Lower leg skin (tissue), 4 donors: ENCODE measurements at regions of chr11 and their contacts with region 1.

Region 1: GRCh38 chr11:7982582-7983119 is 4.5 kb upstream of the EIF3F start:
- DNase-seq: no peak
- H3K4me3 ChIP-seq: no peak overlapping the region
- CTCF ChIP-seq: no peak
- POLR2A ChIP-seq: no peak

Region 2: DNA sequence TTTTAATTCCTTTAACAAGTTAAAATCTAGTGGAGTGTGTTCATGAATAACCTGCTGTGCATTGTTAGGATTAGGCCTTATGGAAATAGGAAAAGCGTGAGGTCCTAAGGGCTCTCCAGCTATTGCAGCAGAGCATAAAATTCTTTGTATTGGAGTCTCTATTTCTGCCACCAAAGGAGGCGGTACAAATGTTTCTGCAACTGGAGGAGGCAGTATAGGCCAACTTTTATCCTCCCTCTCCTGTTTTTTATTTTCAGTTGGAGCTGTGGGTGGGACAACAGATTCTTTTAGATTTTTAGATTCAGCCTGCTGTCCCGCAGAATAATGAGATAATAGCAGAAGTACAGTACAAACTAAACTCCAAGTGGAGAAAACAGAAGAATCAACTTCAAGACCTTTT is 77.7 kb before region 1 on chr11:
- intact Hi-C with region 1: loop called (anchors 5 kb)
- DNase-seq: no peak
- H3K4me3 ChIP-seq: no peak overlapping the region
- CTCF ChIP-seq: no peak
- POLR2A ChIP-seq: no peak